ENCODE measurements at regions of chr3 and their contacts with region 1.

Region 1: DNA sequence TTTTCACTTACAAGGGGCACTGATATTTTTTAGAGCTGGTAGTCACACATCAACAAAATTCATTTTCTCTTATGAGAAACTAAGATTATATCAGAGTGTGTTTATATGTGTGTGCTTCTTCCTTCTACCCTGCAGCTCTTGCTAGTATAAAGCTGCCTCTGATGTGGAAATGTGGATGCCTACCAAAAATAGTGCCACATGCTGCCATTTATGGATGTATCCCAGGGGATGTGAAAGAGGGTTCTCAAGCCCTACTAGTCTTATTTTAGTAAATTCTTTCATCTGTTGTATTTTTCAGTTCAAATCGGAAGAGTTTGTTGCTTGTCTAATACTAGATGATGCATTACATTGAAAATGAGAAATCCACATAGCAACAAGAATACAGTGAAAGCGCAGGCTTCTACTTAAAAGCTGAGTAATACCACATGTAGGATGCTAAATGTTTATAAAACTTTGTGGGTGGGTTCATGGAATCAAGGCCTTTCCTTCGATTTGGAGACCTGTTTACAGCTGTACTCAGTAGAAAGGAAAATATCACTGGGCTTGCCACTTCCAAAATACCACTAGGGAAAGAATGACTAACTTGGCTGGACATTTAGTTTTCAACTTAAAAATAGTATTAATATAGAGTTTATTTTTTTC is 399.2 kb downstream of the EPHA3 start:
- DNase-seq: no peak
- ATAC-seq: no peak
- H3K4me3 ChIP-seq: no peak overlapping the region
- H3K27ac ChIP-seq: no peak overlapping the region
- H3K4me1 ChIP-seq: no peaks in the 10 kb centered on the region
- H3K27me3 ChIP-seq: no peaks in the 10 kb centered on the region
- CTCF ChIP-seq: no peak

Region 2: GRCh38 chr3:89606151-89606550 is 99.6 kb after region 1 on chr3:
- CTCF ChIA-PET with region 1: no interaction called
- POLR2A ChIA-PET with region 1: interaction called, 17 read pairs
- in situ Hi-C with region 1: no loop called
- intact Hi-C with region 1: no loop called
- DNase-seq: no peak
- ATAC-seq: no peak
- H3K4me3 ChIP-seq: no peak overlapping the region
- H3K27ac ChIP-seq: no peak overlapping the region
- H3K4me1 ChIP-seq: no peaks in the 10 kb centered on the region
- H3K27me3 ChIP-seq: no peaks in the 10 kb centered on the region
- CTCF ChIP-seq: no peak

Measured in Panc1 (cell line).